Tibial artery (tissue), 4 donors: ENCODE measurements at regions of chr7 and their contacts with region 1.

Region 1: DNA sequence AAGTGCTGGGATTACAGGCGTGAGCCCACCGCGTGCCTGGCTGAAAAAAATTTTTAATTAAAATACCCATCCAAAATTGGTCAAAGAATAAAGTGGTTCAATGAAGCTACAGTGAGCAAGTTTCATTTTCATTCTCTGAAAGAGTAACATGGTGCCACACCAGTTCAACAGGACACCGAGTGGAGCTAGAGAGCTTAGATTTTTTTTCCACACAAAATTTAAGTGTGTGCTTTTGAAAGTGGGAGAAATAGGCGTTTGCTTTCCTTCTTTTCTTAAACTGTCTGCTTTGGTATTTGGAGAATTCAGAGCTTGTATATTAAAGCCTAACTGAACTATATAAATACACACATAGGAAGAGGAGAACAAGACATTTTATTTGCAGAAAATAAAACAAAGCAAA is 43.4 kb downstream of the BPGM start:
- DNase-seq: no peak
- H3K4me3 ChIP-seq: peak overlapping the region; percentile 47 to 55
- H3K27ac ChIP-seq: peak overlapping the region; percentile 87 to 90
- H3K4me1 ChIP-seq: peaks cover 0 to 70% (median 50%) of the 10 kb centered on the region in 4 donors
- H3K27me3 ChIP-seq: no peaks in the 10 kb centered on the region
- CTCF ChIP-seq: peak; percentile 64 to 66

Region 2: GRCh38 chr7:134514663-134515062 is 175.4 kb before region 1 on chr7:
- intact Hi-C with region 1: no loop called
- DNase-seq: no peak
- H3K4me3 ChIP-seq: no peak overlapping the region
- H3K27ac ChIP-seq: no peak overlapping the region
- H3K4me1 ChIP-seq: peaks cover 0 to 22% (median 16%) of the 10 kb centered on the region in 4 donors
- H3K27me3 ChIP-seq: peaks cover 0 to 5% of the 10 kb centered on the region in 2 donors
- CTCF ChIP-seq: peak; percentile 82 to 85

Region 3: GRCh38 chr7:134646425-134647305 is 43.4 kb before region 1 on chr7 and contains the start of gene BPGM:
- intact Hi-C with region 1: no loop called
- DNase-seq: peak; percentile 98 to 99
- H3K4me3 ChIP-seq: peak within 1 kb of the TSS; percentile 58 to 77
- H3K27ac ChIP-seq: peak within 1 kb of the TSS; percentile 86
- H3K4me1 ChIP-seq: peaks cover 0 to 23% (median 10%) of the 10 kb centered on the region in 4 donors
- H3K27me3 ChIP-seq: no peaks in the 10 kb centered on the region
- CTCF ChIP-seq: peak; percentile 2 to 25

Region 4: GRCh38 chr7:134755401-134756022 is 65.5 kb after region 1 on chr7:
- intact Hi-C with region 1: loop called (anchors 5 kb)
- DNase-seq: no peak
- H3K4me3 ChIP-seq: no peak overlapping the region
- H3K27ac ChIP-seq: no peak overlapping the region
- H3K4me1 ChIP-seq: peaks cover 0 to 24% (median 9%) of the 10 kb centered on the region in 4 donors
- H3K27me3 ChIP-seq: no peaks in the 10 kb centered on the region
- CTCF ChIP-seq: peak; percentile 52 to 54

Region 5: DNA sequence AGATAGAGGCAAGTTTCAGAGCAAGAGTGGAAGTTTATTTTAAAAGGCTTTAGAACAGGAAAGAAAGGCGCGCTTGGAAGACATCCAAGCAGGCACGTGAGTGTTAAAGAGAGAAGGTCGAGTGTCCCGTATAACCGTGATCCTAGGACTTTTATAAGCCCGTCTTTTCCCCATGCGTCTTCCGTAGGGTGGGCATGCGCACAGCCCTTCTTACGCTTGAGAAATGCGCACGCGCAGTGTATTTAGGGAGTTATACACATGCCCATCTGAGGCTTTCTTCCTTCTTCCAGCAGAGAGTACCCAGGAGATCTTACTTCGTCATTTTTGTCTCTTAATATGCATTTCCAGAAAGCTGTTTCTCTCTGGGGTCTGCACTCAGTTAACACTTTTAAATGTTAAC is 141.8 kb after region 1 on chr7:
- intact Hi-C with region 1: loop called (anchors 10 kb)
- DNase-seq: peak; percentile 30 to 84
- H3K4me3 ChIP-seq: peak overlapping the region in 1 of 2 donors; percentile 11
- H3K27ac ChIP-seq: peak overlapping the region; percentile 83 to 89
- H3K4me1 ChIP-seq: peaks cover 0 to 96% (median 53%) of the 10 kb centered on the region in 4 donors
- H3K27me3 ChIP-seq: no peaks in the 10 kb centered on the region
- CTCF ChIP-seq: no peak

Region 6: DNA sequence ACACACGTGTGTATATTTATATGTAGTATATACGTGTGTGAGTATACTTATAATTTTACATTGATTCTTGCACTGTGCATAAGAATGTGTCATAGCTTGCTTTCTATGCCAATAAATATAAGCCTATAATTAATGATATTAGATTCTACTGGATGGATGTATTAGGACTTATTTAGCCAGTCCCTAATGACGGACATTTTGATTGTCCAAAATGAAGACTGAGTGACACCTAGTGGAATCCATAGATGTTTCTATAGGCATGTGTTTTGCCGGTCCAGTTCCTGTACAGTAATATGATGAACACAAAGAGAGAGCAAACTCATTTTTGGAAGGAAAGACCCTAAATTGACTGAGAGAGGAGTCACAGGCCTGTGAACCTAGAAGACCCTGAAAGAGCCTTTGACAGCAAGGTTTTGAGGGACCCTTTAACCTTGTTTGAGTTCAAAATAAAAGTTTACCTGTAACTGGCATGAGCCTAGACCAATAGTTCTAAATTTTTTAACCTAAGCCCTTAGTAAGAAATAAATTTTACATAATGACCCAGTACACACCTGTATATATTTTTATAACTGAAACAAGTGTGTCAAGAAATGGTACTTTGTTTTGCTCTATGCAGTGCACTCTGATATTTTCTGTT is 253.9 kb after region 1 on chr7:
- intact Hi-C with region 1: loop called (anchors 5 kb)
- DNase-seq: no peak
- H3K4me3 ChIP-seq: no peak overlapping the region
- H3K27ac ChIP-seq: peak overlapping the region; percentile 47 to 80
- H3K4me1 ChIP-seq: peaks cover 0 to 55% (median 5%) of the 10 kb centered on the region in 4 donors
- H3K27me3 ChIP-seq: no peaks in the 10 kb centered on the region
- CTCF ChIP-seq: peak; percentile 16 to 30

Region 7: DNA sequence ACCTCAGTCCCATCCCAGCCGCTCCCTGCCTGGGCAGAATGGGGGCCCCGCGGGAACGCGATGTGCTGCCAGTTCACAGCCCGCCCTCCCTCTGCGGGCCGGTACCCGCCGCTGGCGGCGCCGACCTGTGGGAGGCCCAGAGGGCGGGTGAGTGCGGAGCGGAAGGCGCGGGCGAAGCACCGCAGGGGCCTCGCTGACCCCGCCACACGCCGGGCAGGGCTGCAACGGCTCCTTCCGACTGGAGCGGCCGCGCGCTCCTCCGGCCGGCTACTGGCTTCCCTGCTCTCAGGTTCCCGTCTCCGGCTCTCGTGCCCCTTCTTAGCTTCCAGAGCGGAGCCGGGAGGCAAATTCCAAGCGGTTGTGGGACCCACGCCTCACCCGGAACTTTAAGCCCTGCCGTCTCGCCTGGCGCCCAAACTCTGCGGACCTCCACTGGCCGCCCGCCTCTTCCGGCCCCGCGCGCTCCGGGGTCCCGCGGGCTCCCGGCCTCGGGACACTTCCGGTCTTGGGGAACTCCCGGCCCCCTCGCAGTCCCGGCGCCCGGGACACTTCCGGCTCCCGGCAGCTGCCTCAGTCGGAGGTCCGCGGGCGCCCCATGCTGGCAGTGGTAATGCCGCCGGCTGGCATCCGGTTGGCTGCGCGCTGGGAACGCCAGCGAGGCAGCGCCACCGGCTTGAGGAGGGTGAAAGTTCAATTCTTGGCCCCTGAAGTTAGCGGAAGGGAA is 480.4 kb after region 1 on chr7 and contains the start of gene CYREN:
- intact Hi-C with region 1: loop called (anchors 2 kb)
- DNase-seq: peak; percentile 91 to 98
- H3K4me3 ChIP-seq: peak within 1 kb of the TSS; percentile 78 to 99
- H3K27ac ChIP-seq: peak within 1 kb of the TSS; percentile 93 to 97
- H3K4me1 ChIP-seq: peaks cover 7 to 40% (median 35%) of the 10 kb centered on the region in 4 donors
- H3K27me3 ChIP-seq: no peaks in the 10 kb centered on the region
- CTCF ChIP-seq: peak; percentile 61 to 71